Activated CD4-positive, alpha-beta T cell treated with anti-CD3 and anti-CD28 coated beads, Interleukin-2, amount 10 ng/mL, durations not matched to agents 24 days and 14 days (primary cell): ENCODE measurements at regions of chr4 and their contacts with region 1.

Region 1: DNA sequence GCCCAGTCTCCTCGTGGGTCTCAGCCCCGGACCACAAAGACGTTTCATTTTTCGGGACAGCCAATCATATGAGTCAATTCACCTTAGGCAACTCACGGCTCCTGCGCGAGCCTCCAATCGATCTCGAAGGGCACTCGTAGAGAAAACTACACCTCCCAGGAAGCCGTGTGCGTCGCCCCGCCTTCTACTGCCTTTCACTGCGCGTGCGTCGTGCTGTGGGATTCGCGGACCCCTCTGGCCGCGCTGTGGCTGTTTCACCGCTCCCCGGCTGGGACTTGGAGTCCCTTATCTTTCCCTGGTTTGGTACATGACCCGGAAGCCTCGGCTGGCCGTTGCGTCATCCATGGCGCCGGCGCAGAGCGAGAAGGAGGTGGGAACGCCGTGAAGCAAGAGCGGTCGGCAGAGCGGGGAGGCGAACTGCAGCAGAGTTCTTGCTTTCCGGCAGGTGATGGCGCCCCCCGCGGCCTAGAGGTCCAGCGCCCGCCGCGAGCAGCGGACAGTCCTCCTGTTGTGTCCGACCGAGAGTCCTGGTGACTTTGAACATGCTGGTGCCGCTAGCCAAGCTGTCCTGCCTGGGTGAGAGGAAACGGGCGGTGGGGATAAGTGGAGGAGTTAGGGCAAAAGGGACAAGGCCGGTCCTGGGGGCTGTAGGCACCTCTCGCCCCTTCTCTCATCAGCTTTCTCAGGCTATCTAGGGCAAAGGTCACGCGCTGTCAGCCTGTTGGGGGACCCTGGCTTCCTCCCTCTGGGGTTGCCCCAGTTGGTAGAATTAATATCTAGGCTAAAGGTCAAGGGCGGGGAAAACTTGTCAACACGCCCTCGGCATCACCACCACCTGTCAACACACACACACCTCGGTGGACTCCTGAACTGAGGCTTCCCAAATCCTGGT is at the start of gene ETFDH:
- DNase-seq: peak; percentile 99
- H3K4me3 Mint-ChIP-seq: peak within 1 kb of the TSS; percentile 99
- H3K27ac Mint-ChIP-seq: peak within 1 kb of the TSS; percentile 95
- H3K4me1 Mint-ChIP-seq: peaks cover 22% of the 10 kb centered on the region
- H3K27me3 Mint-ChIP-seq: peaks cover 1% of the 10 kb centered on the region
- total RNA-seq, gene ETFDH: 20.8 and 24.7 TPM in 2 replicates

Region 2: GRCh38 chr4:158384407-158384806 is 287.8 kb before region 1 on chr4:
- intact Hi-C with region 1: no loop called
- DNase-seq: no peak
- H3K4me3 Mint-ChIP-seq: no peak overlapping the region
- H3K27ac Mint-ChIP-seq: no peak overlapping the region
- H3K4me1 Mint-ChIP-seq: no peaks in the 10 kb centered on the region
- H3K27me3 Mint-ChIP-seq: no peaks in the 10 kb centered on the region

Region 3: GRCh38 chr4:158722917-158723793 is 51.0 kb after region 1 on chr4 and contains the start of gene PPID:
- intact Hi-C with region 1: loop called (anchors 1 kb)
- DNase-seq: peak; percentile 96
- H3K4me3 Mint-ChIP-seq: peak within 1 kb of the TSS; percentile 95
- H3K27ac Mint-ChIP-seq: peak within 1 kb of the TSS; percentile 99
- H3K4me1 Mint-ChIP-seq: peaks cover 45% of the 10 kb centered on the region
- H3K27me3 Mint-ChIP-seq: no peaks in the 10 kb centered on the region
- total RNA-seq, gene PPID: 62.9 and 64.7 TPM in 2 replicates

Region 4: GRCh38 chr4:158817562-158818296 is 145.6 kb after region 1 on chr4:
- intact Hi-C with region 1: loop called (anchors 5 kb)
- DNase-seq: peak; percentile 55
- H3K4me3 Mint-ChIP-seq: peak overlapping the region; percentile 12
- H3K27ac Mint-ChIP-seq: peak overlapping the region; percentile 87
- H3K4me1 Mint-ChIP-seq: peaks cover 58% of the 10 kb centered on the region
- H3K27me3 Mint-ChIP-seq: no peaks in the 10 kb centered on the region

Region 5: DNA sequence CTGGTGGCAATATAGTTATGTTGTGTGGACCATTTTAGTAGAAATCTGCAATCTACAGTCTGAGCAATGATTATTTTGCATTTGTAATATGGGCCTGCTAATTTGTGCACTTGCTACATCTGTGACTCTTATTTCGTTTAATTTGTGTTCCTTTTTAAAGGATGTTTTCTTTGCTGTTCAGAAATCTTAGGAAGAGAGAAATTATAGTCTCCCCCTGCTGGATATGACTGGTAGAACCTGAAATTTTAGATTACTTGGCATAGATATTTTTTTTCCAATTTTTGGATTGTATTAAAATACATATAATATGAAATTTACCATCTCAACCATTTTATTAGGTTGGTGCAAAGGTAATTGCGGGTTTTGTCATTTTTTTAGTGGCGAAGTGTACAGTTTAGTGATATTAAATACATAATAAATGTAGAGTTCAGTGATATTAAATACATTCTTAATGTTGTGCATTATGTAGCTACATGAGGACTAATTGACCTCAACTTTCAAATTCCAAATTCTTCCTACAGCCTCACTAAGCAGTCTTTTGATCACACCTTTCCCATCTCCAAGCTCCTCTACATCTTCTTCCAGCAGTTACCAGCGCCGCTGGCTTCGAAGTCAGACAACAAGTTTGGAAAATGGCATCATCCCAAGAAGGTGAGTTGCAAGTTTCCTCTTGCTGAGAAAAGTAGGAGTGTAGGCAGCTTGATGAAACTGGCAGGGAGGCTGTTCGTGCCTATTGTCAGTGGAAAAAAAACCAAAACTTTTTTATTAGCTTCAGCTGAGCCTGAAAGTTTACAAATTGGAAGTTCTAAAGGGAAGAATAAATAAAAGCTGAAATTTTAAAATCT is 178.9 kb after region 1 on chr4:
- intact Hi-C with region 1: loop called (anchors 5 kb)
- DNase-seq: no peak
- H3K4me3 Mint-ChIP-seq: no peak overlapping the region
- H3K27ac Mint-ChIP-seq: no peak overlapping the region
- H3K4me1 Mint-ChIP-seq: peaks cover 17% of the 10 kb centered on the region
- H3K27me3 Mint-ChIP-seq: no peaks in the 10 kb centered on the region

Region 6: DNA sequence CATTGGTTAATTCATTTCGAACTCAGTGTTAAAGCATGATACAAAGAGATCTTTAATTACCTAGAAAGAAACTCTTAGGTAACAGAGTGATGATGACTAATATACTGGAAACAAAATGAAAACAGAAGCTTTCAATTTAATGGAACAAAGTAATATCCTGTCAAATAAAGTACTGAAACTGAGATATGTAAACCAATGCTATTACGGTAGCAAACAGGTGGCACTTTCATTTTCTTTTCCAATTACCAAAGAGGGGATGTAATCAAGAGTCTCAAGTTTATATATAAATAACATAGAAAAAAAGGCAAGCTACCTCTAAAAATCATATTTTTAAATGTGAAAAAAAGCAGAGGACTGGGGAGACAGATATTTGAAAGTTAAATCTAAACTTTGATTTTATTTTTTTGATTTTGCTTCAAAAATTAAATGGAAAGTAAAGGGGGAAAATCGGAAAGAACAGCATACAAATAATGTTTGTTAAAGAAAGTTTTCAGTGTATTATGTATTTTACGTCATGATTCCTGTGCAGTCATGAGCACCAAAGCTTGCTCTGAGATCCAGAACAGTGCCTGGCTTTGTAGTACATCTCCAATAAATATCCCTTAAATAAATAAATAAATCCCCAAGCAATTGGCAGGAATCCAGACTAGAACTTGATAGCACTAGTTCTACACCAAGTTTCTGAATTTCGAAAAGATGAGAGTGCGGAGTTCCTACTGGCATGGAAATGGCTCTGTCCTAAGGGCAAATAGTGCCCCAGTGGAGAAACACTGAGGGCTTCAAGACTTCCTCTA is 405.7 kb after region 1 on chr4:
- intact Hi-C with region 1: loop called (anchors 1 kb)
- DNase-seq: no peak
- H3K4me3 Mint-ChIP-seq: peak overlapping the region; percentile 16
- H3K27ac Mint-ChIP-seq: peak overlapping the region; percentile 6
- H3K4me1 Mint-ChIP-seq: peaks cover 10% of the 10 kb centered on the region
- H3K27me3 Mint-ChIP-seq: no peaks in the 10 kb centered on the region